ENCODE measurements at regions of chr21 and their contacts with region 1.

Region 1: DNA sequence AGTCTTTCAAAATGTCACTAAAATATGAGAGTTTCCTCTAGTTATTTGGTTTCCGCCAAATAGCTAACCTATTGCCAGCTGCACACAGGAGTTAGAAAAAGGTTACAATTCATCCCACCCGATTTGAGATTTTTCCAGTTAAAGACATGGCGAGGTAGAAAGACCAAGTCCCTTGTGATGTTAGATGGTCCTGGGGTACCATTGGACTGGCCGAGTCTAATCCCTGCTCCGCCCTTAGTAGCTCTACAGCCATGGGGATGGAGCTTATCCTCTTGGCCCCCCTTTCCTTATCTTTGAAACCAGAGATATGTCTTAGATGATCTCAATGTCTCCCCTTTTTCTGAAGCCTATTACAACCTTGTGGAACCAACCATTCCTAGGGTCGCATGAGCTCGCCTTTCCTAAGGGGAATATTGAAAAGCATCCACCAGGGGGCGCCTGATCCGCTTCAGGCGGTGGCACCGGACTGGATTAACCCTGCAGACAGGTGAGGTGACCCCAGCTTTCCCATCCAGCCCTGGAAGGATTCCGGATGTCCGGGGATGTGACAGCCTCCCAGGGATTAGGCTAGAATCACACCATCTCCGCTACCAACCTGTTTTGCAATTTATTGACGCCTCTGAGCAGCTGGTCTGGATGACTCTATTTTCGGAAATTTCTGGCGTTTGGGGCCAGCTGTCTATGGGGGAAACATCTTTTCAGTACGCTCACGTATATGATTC is 68.3 kb upstream of the SIM2 start:
- DNase-seq: peak; percentile 48
- ATAC-seq: peak; percentile 92
- H3K4me3 ChIP-seq: no peak overlapping the region
- H3K27ac ChIP-seq: no peak overlapping the region
- H3K4me1 ChIP-seq: no peaks in the 10 kb centered on the region
- H3K27me3 ChIP-seq: peaks cover 1 to 29% of the 10 kb centered on the region in 2 experiments; a peak in 4 of 5 replicates
- CTCF ChIP-seq: peak; percentile 87
- EP300 ChIP-seq: no peak
- POLR2A ChIP-seq: no peak
- RAD21 ChIP-seq: peak; percentile 65; the same call in 1 of the 2 replicates

Region 2: GRCh38 chr21:36854391-36854790 is 223.7 kb after region 1 on chr21:
- CTCF ChIA-PET with region 1: interaction called, 3 read pairs
- POLR2A ChIA-PET with region 1: no interaction called
- in situ Hi-C with region 1: no loop called
- intact Hi-C with region 1: loop called (anchors 10 kb)
- DNase-seq: peak; percentile 52
- ATAC-seq: peak; percentile 73
- H3K4me3 ChIP-seq: no peak overlapping the region
- H3K27ac ChIP-seq: no peak overlapping the region
- H3K4me1 ChIP-seq: peaks cover 36% of the 10 kb centered on the region
- H3K27me3 ChIP-seq: no peaks in the 10 kb centered on the region
- CTCF ChIP-seq: peak; percentile 81
- EP300 ChIP-seq: no peak
- POLR2A ChIP-seq: no peak
- RAD21 ChIP-seq: peak; percentile 38; the same call in 1 of the 2 replicates